RWPE1 (cell line): ENCODE measurements at regions of chr1 and their contacts with region 1.

Region 1: GRCh38 chr1:200620273-200621131 is at the start of gene KIF14:
- DNase-seq: peak; percentile 99
- H3K27ac ChIP-seq: peak within 1 kb of the TSS; percentile 82
- CTCF ChIP-seq: no peak

Region 2: GRCh38 chr1:200802865-200803512 is 182.5 kb after region 1 on chr1:
- CTCF ChIA-PET with region 1: interaction called, 25 read pairs
- POLR2A ChIA-PET with region 1: no interaction called
- DNase-seq: peak; percentile 89
- H3K27ac ChIP-seq: no peak overlapping the region
- CTCF ChIP-seq: peak; percentile 92